HEK293 (cell line): ENCODE measurements at regions of chr7 and their contacts with region 1.

Region 1: DNA sequence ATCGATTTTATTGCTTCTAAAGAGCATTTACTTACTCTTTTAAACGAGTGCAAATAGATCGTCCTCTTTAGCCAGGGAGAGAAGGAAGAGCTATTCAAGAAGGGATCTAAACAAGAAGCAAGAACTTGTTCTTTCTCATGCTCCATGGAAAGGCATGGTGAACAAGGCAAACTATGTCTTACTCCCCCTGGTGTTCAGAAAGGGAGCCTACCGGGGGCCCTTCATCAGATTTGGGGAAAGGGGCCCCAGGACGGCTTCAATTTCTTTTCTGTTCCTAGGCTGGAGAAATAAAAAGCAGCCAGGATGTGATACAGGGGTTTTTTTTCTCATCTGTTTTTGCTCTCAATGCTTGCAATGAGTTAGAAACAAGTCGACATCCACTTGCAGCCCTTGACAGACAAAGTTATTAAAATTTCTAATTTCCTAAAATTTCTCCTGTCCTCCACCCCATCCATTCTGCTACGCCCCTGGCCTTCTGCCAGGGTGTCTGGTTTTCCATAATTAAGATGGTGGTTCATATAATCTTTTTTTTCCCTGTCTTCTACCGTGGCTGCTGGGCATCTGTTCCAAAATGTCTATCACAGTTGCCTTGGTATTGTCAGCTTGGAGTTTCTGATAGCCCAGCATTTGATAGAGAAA is 214.4 kb downstream of the CREB5 start:
- H3K4me3 ChIP-seq: no peak overlapping the region
- H3K27ac ChIP-seq: no peak overlapping the region
- H3K4me1 ChIP-seq: peaks cover 14% of the 10 kb centered on the region
- CTCF ChIP-seq: no peak

Region 2: DNA sequence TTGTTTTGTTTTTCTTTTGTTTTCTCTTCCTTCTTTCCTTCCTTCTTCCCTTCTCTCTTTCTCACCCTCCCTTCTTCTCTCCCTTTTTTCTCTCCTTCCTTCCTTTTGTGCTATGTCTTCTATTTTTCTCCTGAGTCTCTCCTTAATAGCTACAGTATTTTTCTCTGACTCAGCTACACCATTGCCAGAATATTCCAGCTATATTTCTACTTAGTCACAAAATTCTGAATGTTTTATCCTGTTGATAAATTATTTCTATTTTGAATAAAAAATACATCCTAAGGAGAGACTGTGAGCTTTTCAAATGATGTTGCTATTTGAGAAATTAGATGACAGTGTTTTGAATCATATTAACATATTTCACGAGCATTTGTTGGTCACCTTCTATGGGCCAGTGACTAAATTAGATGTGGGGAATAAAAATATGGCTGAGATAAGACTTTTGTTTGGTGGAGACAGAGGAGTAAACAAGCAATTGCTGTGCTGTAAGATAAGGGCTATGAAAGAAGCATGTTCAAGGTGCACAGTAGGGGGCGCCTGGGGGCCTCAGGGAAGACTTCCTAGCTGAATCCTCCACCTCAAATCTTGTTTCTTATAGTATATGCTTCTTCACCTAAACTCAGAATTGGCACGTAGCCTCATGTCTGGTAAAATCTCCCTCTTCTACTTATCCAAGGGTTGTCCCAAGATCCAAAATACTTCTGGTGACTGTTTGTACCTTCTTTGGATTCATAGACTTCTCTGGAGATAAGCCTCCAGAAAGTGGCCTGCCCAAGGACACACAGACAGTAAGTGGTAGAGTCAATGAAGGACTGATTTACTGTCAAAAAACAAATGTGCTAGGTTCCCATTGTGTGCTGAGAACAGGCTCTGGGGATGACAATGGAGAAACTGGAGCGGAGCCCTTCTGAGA is 329.9 kb before region 1 on chr7:
- CTCF ChIA-PET with region 1: interaction called, 11 read pairs
- POLR2A ChIA-PET with region 1: no interaction called
- H3K4me3 ChIP-seq: no peak overlapping the region
- H3K27ac ChIP-seq: no peak overlapping the region
- H3K4me1 ChIP-seq: peaks cover 12% of the 10 kb centered on the region
- CTCF ChIP-seq: no peak

Region 3: DNA sequence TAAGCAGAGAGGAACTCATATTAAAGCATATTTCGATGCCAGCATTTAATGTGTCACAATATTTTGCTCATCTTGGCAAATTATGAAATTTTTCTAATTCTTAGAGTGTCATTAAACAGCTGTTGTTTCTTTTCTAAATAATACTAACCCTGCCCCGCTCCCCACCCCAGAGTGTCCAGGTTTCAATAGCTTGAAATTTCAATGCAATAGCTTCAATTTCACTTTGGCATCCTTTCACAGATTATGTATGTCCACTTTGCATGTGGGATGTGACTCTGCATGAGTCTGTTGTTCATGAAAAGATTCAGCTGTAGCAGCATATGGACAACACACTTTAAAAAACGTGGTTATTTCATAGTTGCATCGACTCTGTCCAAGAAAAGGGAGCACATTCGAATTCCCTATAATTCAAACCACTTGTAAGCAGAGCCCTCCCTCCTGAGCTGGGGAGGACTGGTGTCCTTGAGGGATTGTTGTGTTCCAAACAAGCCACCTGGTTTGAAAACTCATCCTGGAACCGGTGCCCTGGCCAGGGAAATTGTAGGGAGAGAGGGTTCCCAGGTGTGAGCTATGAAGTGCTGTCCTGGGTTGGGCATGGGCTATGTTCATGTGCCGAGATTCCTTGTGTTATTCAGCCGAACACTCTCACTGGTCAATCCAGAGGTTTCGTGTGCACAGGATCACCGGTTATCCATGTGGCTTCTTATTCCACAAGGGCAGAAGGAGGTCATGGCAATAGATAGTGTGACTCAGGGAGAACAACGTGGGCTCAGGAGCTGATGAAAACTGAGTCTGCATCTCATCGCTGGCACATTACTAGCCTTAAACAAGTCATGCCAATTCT is 279.0 kb before region 1 on chr7:
- CTCF ChIA-PET with region 1: no interaction called
- POLR2A ChIA-PET with region 1: no interaction called
- H3K4me3 ChIP-seq: no peak overlapping the region
- H3K27ac ChIP-seq: no peak overlapping the region
- H3K4me1 ChIP-seq: no peaks in the 10 kb centered on the region
- CTCF ChIP-seq: no peak

Region 4: GRCh38 chr7:28389504-28390395 is 237.0 kb before region 1 on chr7:
- CTCF ChIA-PET with region 1: interaction called, 13 read pairs
- POLR2A ChIA-PET with region 1: no interaction called
- H3K4me3 ChIP-seq: peak overlapping the region; percentile 41
- H3K27ac ChIP-seq: peak overlapping the region; percentile 41
- H3K4me1 ChIP-seq: no peaks in the 10 kb centered on the region
- CTCF ChIP-seq: peak; percentile 29; the same call in 1 of the 2 replicates

Region 5: DNA sequence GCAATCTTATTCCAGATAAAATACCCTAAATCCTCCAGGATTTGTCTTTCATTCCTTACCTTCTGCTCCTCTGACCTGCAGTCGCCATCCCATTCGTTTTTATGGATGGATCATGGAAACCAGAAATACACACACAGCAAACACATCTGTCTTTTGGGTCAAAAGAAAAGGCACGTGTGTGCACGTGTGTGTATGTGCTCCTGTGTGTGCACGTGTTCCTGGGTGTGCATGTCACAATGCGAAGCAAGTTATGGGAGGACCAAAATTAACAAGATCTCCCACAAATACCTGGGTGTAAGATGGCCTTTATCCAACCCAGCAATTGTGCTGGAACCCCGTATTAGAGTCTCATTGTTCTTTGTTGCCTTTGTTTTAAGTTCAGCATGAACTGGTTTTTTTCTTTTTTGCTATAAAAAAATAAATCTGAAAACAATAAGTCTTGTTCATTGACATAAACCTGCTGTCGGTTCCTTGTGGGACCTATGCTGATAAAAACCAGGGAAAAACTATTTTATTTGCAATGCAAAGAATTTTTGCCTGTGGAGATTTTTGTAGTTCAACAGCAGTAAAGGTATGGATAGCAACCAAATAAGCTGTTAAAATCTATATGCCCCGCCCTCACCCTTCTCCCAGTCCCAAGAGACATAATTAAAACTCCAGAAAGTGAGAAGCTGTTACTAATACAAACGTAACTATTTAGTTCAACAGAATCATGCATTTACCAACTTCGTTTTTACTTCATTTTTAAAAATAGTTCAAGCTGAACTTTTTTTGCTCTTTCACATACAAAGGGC is 15.2 kb after region 1 on chr7:
- CTCF ChIA-PET with region 1: interaction called, 10 read pairs
- POLR2A ChIA-PET with region 1: no interaction called
- H3K4me3 ChIP-seq: no peak overlapping the region
- H3K27ac ChIP-seq: no peak overlapping the region
- H3K4me1 ChIP-seq: no peaks in the 10 kb centered on the region; the same call in 1 of the 2 replicates
- CTCF ChIP-seq: no peak